ENCODE measurements at regions of chr1 and their contacts with region 1.

Region 1: DNA sequence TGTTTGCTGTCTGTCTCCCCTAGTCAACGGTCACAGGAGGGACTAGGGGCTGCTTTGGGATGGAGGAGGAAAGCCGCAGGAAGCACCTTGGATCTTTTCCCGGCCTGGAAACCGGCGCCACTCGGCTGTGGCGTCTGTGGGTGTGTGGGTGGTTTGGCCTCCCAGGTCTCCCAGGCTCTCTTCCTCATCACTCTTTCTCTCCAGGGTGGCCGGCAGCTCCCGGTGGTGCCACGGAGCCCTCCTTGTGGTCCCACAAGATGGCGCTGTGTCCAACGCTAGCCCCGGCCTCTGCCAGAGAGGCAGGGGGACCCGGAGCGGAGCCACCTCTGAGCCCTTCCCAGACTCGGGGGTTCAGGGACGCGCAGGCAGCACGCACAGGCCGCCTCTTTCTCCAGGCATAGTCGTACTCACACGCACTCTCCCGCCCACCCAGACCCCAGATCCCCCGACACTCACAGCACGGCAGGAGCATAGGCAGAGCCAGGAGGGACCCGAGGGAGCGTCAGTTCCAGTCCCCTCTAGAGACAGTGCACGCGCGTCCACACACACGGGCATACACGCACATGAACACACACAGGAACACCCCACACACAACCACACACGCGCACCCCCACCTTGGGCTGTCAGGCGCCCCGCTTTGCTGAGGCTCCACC is 31.2 kb downstream of the CDCP2 start:
- DNase-seq: peak; percentile 74
- H3K4me3 ChIP-seq: peak overlapping the region in 1 of 3 experiments; percentile 2
- H3K27ac ChIP-seq: no peak overlapping the region
- H3K4me1 ChIP-seq: peaks cover 3% of the 10 kb centered on the region
- H3K27me3 ChIP-seq: no peaks in the 10 kb centered on the region
- CTCF ChIP-seq: peak; percentile 77 to 88
- POLR2A ChIP-seq: no peak

Region 2: GRCh38 chr1:54001591-54001990 is 120.0 kb before region 1 on chr1:
- CTCF ChIA-PET with region 1: no interaction called
- POLR2A ChIA-PET with region 1: no interaction called
- dilution Hi-C with region 1: no loop called
- intact Hi-C with region 1: no loop called
- DNase-seq: no peak
- H3K4me3 ChIP-seq: no peak overlapping the region
- H3K27ac ChIP-seq: no peak overlapping the region
- H3K4me1 ChIP-seq: no peaks in the 10 kb centered on the region
- H3K27me3 ChIP-seq: peaks cover 0 to 2% of the 10 kb centered on the region in 2 experiments
- CTCF ChIP-seq: no peak
- POLR2A ChIP-seq: no peak

Region 3: GRCh38 chr1:54132495-54132894 is 10.9 kb after region 1 on chr1:
- CTCF ChIA-PET with region 1: interaction called, 20 read pairs
- POLR2A ChIA-PET with region 1: no interaction called
- dilution Hi-C with region 1: no loop called
- intact Hi-C with region 1: loop called (anchors 1 kb)
- DNase-seq: no peak
- H3K4me3 ChIP-seq: no peak overlapping the region
- H3K27ac ChIP-seq: no peak overlapping the region
- H3K4me1 ChIP-seq: peaks cover 5% of the 10 kb centered on the region
- H3K27me3 ChIP-seq: peaks cover 0 to 5% of the 10 kb centered on the region in 2 experiments
- CTCF ChIP-seq: no peak
- POLR2A ChIP-seq: no peak

Region 4: DNA sequence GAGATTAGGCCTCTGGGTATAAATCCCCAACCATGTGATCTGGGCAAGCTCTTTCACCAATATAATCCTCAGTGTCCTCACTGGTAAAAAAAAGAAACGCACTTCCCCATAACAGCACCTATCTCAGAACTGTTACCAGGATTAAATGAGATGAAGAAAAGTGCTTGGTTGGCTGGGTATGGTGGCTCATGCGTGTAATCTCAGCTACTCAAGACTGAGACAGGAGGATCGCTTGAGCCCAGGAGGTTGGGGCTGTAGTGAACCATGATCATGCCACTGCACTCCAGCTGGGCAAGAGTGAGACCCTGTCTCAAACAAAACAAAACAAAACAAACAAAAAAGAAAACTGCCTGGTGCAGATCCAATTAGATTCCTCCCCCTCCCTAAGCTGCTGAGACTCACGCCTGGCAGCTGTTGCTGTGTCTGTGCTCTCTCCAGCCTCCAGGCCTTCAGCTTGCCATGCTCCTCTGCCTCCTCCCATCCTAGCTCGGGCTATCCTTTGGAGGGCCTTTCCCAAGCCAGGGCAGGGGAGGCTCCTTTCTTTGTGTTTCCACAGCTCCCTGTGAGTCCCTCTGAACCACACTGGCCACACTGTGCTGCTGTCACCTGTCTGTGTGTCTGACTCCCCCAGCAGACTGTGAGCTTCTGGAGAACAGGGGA is 59.2 kb after region 1 on chr1:
- CTCF ChIA-PET with region 1: interaction called, 21 read pairs
- POLR2A ChIA-PET with region 1: no interaction called
- dilution Hi-C with region 1: no loop called
- intact Hi-C with region 1: no loop called
- DNase-seq: no peak
- H3K4me3 ChIP-seq: no peak overlapping the region
- H3K27ac ChIP-seq: no peak overlapping the region
- H3K4me1 ChIP-seq: peaks cover 5% of the 10 kb centered on the region
- H3K27me3 ChIP-seq: no peaks in the 10 kb centered on the region
- CTCF ChIP-seq: no peak
- POLR2A ChIP-seq: no peak

Region 5: GRCh38 chr1:54220004-54220811 is 98.6 kb after region 1 on chr1:
- CTCF ChIA-PET with region 1: interaction called, 26 read pairs
- POLR2A ChIA-PET with region 1: no interaction called
- dilution Hi-C with region 1: no loop called
- intact Hi-C with region 1: no loop called
- DNase-seq: no peak
- H3K4me3 ChIP-seq: no peak overlapping the region
- H3K27ac ChIP-seq: no peak overlapping the region
- H3K4me1 ChIP-seq: peaks cover 3% of the 10 kb centered on the region
- H3K27me3 ChIP-seq: no peaks in the 10 kb centered on the region
- CTCF ChIP-seq: no peak
- POLR2A ChIP-seq: no peak

Region 6: GRCh38 chr1:54406339-54407153 is 284.9 kb after region 1 on chr1 and contains the start of gene SSBP3:
- CTCF ChIA-PET with region 1: interaction called, 20 read pairs
- POLR2A ChIA-PET with region 1: no interaction called
- dilution Hi-C with region 1: no loop called
- intact Hi-C with region 1: loop called (anchors 1 kb)
- DNase-seq: peak; percentile 95
- H3K4me3 ChIP-seq: peak within 1 kb of the TSS; percentile 71 to 85 (median 80)
- H3K27ac ChIP-seq: peak within 1 kb of the TSS; percentile 61
- H3K4me1 ChIP-seq: peaks cover 41% of the 10 kb centered on the region
- H3K27me3 ChIP-seq: no peaks in the 10 kb centered on the region
- CTCF ChIP-seq: peak in 1 of 2 donors; percentile 6
- POLR2A ChIP-seq: no peak
- total RNA-seq, gene SSBP3: 49.5 and 59.4 TPM in 2 replicates

Measured in endothelial cell of umbilical vein (primary cell).